ENCODE measurements at regions of chr2 and their contacts with region 1.

Region 1: DNA sequence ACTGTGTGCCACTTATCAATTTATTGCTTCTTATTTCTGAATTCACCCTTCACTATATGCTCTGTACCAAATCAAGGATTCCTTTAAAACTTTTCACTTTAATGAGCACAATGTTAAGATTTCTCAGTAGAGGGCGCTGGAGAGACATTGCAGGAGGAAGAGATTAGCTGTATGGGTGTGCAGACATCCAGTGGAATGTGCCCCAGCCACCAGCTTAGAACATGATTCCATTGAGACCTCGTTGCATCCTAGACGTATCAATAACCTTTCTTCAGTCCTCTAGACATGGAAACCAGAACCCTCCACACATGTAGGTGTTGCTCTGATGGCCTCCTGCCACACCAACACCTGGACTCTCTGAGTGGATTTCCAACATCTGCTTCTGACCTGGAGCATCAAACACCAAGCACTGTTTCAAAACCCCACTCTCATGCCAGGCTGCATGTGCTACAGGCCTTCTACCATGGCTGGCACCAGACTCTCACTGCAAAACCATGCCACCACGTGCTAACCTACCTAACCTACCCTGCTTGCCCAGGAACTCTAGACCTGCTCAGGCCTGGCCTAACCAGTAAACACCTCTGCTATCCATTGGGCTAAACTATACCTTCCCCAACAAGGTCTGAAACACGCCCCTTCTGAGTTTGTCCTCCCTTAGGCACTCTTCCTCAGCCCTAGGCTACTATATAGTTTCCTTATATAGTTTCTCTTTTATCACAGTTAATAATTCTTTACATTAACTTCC is 633.2 kb upstream of the PKDCC start:
- DNase-seq: peak; percentile 5
- ATAC-seq: peak; percentile 82
- H3K4me3 ChIP-seq: no peak overlapping the region
- H3K27ac ChIP-seq: no peak overlapping the region
- H3K4me1 ChIP-seq: no peaks in the 10 kb centered on the region
- H3K27me3 ChIP-seq: no peaks in the 10 kb centered on the region
- CTCF ChIP-seq: peak; percentile 52 to 64 (median 53); a peak in 5 of 6 replicates
- EP300 ChIP-seq: no peak
- POLR2A ChIP-seq: no peak
- RAD21 ChIP-seq: peak; percentile 77

Region 2: DNA sequence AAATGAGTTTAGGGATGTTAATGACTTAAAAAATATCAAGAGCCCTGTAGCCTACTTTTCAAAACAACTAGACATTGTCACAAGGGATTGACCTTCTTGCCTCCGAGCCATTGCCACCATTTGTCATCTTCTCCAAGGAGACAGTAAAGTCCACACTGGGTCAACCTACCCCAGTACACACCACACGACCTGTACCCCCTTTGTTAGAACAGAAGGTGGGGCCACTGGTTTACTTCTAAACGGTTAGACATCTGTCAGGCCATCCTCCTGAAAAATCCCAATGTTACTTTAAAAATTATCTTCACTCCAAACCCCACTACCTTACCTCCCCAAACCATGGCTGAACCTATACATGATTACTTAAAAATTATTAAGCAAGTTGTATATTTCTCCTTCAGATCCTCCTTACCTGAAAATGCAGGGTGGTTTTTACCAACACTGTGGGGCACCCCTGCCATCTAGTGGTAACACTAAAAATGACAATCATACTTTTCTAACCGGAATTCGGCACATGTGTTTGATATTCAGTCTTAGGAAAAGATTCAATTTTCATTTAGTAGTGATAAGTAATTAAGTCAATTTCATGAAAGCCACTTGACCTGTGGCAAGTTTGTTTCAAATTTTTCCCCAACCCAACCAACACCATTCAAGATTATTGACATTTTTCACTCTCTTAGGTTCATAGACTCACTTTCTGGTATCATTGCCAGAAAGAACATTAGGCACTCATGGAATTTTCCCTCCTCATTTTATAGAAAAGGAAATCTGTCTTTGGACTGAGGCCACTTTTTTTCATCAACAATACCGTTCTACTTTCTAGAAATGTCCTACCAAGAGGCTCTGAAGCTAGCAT is 367.9 kb after region 1 on chr2:
- CTCF ChIA-PET with region 1: interaction called, 9 read pairs
- POLR2A ChIA-PET with region 1: no interaction called
- RAD21 ChIA-PET with region 1: interaction called, 5 read pairs
- SMC1A ChIA-PET with region 1: no interaction called
- in situ Hi-C with region 1: loop called (anchors 5 kb)
- intact Hi-C with region 1: loop called (anchors 1 kb)
- DNase-seq: peak; percentile 15
- ATAC-seq: peak; percentile 71
- H3K4me3 ChIP-seq: no peak overlapping the region
- H3K27ac ChIP-seq: no peak overlapping the region
- H3K4me1 ChIP-seq: no peaks in the 10 kb centered on the region
- H3K27me3 ChIP-seq: no peaks in the 10 kb centered on the region
- CTCF ChIP-seq: peak; percentile 74 to 87 (median 76)
- EP300 ChIP-seq: no peak
- POLR2A ChIP-seq: no peak
- RAD21 ChIP-seq: peak; percentile 95